Caco-2 (cell line): ENCODE measurements at regions of chr1 and their contacts with region 1.

Region 1: GRCh38 chr1:110087812-110088738 is 17.6 kb upstream of the ALX3 start:
- DNase-seq: peak in 1 of 2 experiments; percentile 58
- H3K4me3 ChIP-seq: no peak overlapping the region
- H3K4me3 Mint-ChIP-seq: no peak overlapping the region
- H3K27ac Mint-ChIP-seq: no peak overlapping the region
- H3K4me1 ChIP-seq: peaks cover 11% of the 10 kb centered on the region
- H3K4me1 Mint-ChIP-seq: peaks cover 7% of the 10 kb centered on the region
- H3K27me3 ChIP-seq: no peaks in the 10 kb centered on the region
- H3K27me3 Mint-ChIP-seq: peaks cover 9% of the 10 kb centered on the region
- CTCF ChIP-seq: peak; percentile 52 to 60

Region 2: DNA sequence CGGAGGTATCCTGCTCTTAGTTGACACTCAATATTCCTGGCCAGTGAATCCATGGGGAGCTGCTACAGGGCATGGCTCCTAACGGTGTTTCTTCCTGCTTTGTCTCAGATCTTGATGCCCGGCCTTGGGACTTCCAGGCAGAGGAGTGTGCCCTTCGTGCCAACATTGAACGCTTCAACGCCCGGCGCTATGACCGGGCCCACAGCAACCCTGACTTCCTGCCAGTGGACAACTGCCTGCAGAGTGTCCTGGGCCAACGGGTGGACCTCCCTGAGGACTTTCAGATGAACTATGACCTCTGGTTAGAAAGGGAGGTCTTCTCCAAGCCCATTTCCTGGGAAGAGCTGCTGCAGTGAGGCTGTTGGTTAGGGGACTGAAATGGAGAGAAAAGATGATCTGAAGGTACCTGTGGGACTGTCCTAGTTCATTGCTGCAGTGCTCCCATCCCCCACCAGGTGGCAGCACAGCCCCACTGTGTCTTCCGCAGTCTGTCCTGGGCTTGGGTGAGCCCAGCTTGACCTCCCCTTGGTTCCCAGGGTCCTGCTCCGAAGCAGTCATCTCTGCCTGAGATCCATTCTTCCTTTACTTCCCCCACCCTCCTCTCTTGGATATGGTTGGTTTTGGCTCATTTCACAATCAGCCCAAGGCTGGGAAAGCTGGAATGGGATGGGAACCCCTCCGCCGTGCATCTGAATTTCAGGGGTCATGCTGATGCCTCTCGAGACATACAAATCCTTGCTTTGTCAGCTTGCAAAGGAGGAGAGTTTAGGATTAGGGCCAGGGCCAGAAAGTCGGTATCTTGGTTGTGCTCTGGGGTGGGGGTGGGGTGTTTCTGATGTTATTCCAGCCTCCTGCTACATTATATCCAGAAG is 34.3 kb before region 1 on chr1:
- CTCF ChIA-PET with region 1: interaction called, 5 read pairs
- POLR2A ChIA-PET with region 1: no interaction called
- intact Hi-C with region 1: loop called (anchors 5 kb)
- DNase-seq: peak; percentile 51 to 77
- H3K4me3 ChIP-seq: no peak overlapping the region
- H3K4me3 Mint-ChIP-seq: no peak overlapping the region
- H3K27ac Mint-ChIP-seq: peak overlapping the region; percentile 50
- H3K4me1 ChIP-seq: peaks cover 4% of the 10 kb centered on the region
- H3K4me1 Mint-ChIP-seq: peaks cover 2% of the 10 kb centered on the region
- H3K27me3 ChIP-seq: no peaks in the 10 kb centered on the region
- H3K27me3 Mint-ChIP-seq: no peaks in the 10 kb centered on the region
- CTCF ChIP-seq: peak; percentile 79 to 81

Region 3: GRCh38 chr1:110100335-110100734 is 12.3 kb after region 1 on chr1:
- CTCF ChIA-PET with region 1: interaction called, 55 read pairs
- POLR2A ChIA-PET with region 1: no interaction called
- intact Hi-C with region 1: no loop called
- DNase-seq: no peak
- H3K4me3 ChIP-seq: no peak overlapping the region
- H3K4me3 Mint-ChIP-seq: no peak overlapping the region
- H3K27ac Mint-ChIP-seq: no peak overlapping the region
- H3K4me1 ChIP-seq: no peaks in the 10 kb centered on the region
- H3K4me1 Mint-ChIP-seq: no peaks in the 10 kb centered on the region
- H3K27me3 ChIP-seq: no peaks in the 10 kb centered on the region
- H3K27me3 Mint-ChIP-seq: peaks cover 3% of the 10 kb centered on the region
- CTCF ChIP-seq: no peak

Region 4: GRCh38 chr1:110106013-110106941 is 18.2 kb after region 1 on chr1:
- CTCF ChIA-PET with region 1: interaction called, 55 read pairs
- POLR2A ChIA-PET with region 1: no interaction called
- intact Hi-C with region 1: loop called (anchors 1 kb)
- DNase-seq: peak; percentile 68 to 70
- H3K4me3 ChIP-seq: no peak overlapping the region
- H3K4me3 Mint-ChIP-seq: no peak overlapping the region
- H3K27ac Mint-ChIP-seq: no peak overlapping the region
- H3K4me1 ChIP-seq: no peaks in the 10 kb centered on the region
- H3K4me1 Mint-ChIP-seq: no peaks in the 10 kb centered on the region
- H3K27me3 ChIP-seq: no peaks in the 10 kb centered on the region
- H3K27me3 Mint-ChIP-seq: peaks cover 8% of the 10 kb centered on the region
- CTCF ChIP-seq: peak; percentile 70 to 81

Region 5: DNA sequence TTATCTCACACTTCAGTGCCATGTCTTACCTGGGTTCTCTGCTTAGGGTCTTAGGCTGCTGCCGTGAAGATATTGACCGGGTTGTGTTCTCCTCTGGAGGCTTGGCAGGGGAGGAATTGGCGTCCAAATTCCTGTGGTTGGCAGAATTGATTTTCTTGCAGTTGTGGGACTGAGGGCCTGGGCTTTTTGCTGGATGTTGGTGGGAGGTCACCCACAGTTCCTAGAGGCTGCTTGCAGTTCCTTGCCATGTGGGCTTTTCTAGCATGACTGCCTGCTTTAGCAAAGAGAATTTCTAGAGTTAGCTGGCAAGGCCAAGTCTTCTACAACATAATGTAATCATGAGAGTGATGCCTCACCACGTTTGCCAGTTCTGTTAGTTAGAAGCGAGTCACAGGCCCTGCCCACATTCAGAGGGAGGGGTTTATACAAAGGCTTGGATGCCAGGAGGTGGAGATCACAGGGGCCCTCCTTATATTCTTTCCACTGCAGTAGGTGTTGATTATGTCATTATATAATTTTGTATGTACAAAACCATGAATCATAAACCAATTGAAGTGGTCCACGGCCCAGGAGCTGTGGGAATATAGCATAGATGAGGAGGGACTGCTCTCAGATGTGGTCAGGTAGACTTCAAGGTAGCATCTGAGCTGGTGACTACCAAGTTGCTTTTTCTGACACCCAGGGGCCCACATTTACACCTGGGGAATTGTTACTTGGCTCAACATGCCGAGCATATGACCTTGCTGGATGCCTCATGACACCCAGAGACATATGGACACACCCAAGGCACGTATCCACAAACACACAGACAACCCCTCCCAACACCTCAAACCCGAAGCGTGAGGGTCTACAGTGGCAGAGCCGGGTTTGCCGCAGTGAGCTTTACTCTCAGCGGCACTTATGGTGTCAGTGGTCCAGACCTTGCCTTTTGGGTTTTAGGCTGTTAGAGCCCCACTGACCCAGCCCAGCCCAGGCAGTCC is 30.9 kb after region 1 on chr1:
- CTCF ChIA-PET with region 1: interaction called, 5 read pairs
- POLR2A ChIA-PET with region 1: no interaction called
- intact Hi-C with region 1: loop called (anchors 1 kb)
- DNase-seq: no peak
- H3K4me3 ChIP-seq: no peak overlapping the region
- H3K4me3 Mint-ChIP-seq: no peak overlapping the region
- H3K27ac Mint-ChIP-seq: no peak overlapping the region
- H3K4me1 ChIP-seq: no peaks in the 10 kb centered on the region
- H3K4me1 Mint-ChIP-seq: peaks cover 4% of the 10 kb centered on the region
- H3K27me3 ChIP-seq: no peaks in the 10 kb centered on the region
- H3K27me3 Mint-ChIP-seq: no peaks in the 10 kb centered on the region
- CTCF ChIP-seq: no peak